PC-9 (cell line): ENCODE measurements at regions of chr5 and their contacts with region 1.

Region 1: GRCh38 chr5:145834917-145835847 is at the start of gene PRELID2:
- DNase-seq: peak; percentile 80 to 94
- H3K4me3 ChIP-seq: peak within 1 kb of the TSS; percentile 71
- H3K27ac ChIP-seq: peak within 1 kb of the TSS; percentile 35
- H3K4me1 ChIP-seq: peaks cover 25% of the 10 kb centered on the region
- H3K27me3 ChIP-seq: no peaks in the 10 kb centered on the region
- CTCF ChIP-seq: 0 out of 2 replicates have a peak, but pooled peaks have one; percentile 2
- total RNA-seq, gene PRELID2: 24.8 and 27.7 TPM in 2 replicates

Region 2: GRCh38 chr5:145887976-145888574 is 52.9 kb after region 1 on chr5:
- CTCF ChIA-PET with region 1: interaction called, 4 read pairs
- POLR2A ChIA-PET with region 1: no interaction called
- intact Hi-C with region 1: loop called (anchors 2 kb)
- DNase-seq: peak; percentile 49 to 55
- H3K4me3 ChIP-seq: no peak overlapping the region
- H3K27ac ChIP-seq: no peak overlapping the region
- H3K4me1 ChIP-seq: no peaks in the 10 kb centered on the region
- H3K27me3 ChIP-seq: no peaks in the 10 kb centered on the region
- CTCF ChIP-seq: peak; percentile 80

Region 3: DNA sequence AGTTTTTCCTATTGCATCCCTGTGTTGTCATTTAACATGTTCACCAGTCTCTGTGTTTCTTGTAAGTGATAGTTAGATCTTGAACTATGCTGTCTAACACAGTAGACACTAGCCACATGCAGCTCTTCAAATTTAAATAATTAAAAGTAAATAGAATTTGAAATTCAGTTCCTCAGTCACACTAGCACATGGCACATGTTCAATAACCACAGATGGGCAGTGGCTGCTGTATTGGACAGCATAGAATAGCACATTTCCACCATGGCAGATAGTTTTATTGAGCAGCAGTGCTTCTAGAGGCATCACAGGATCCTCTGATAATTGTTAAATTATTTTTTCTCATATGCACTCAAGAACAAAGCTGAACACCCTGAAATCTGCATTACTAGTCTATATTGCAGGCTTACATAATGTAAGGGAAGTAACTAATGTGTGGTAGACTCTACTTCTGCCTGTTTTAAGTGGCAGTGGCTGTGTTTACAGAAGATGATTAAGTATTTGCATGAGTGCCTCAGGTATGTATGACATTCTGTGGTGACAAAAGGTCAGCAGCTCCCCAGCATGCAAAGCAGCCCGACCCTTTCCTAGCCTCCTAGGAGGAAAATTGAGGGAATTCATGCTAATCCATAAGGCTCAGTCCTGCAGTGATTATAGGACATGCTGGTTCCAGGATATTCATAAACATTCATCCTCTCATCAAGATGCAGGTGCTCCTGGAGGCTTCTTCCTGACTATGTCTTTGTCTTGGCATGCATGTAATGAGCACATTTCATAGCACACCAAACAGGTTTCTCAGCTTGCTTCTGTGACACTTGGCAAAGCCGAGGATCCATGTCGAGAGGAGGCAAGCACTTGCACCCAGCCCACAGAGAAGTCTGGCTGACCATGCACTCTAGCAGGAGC is 146.7 kb after region 1 on chr5:
- CTCF ChIA-PET with region 1: no interaction called
- POLR2A ChIA-PET with region 1: no interaction called
- intact Hi-C with region 1: loop called (anchors 5 kb)
- DNase-seq: peak; percentile 70 to 89
- H3K4me3 ChIP-seq: no peak overlapping the region
- H3K27ac ChIP-seq: peak overlapping the region; percentile 57
- H3K4me1 ChIP-seq: peaks cover 48% of the 10 kb centered on the region
- H3K27me3 ChIP-seq: no peaks in the 10 kb centered on the region
- CTCF ChIP-seq: no peak

Region 4: DNA sequence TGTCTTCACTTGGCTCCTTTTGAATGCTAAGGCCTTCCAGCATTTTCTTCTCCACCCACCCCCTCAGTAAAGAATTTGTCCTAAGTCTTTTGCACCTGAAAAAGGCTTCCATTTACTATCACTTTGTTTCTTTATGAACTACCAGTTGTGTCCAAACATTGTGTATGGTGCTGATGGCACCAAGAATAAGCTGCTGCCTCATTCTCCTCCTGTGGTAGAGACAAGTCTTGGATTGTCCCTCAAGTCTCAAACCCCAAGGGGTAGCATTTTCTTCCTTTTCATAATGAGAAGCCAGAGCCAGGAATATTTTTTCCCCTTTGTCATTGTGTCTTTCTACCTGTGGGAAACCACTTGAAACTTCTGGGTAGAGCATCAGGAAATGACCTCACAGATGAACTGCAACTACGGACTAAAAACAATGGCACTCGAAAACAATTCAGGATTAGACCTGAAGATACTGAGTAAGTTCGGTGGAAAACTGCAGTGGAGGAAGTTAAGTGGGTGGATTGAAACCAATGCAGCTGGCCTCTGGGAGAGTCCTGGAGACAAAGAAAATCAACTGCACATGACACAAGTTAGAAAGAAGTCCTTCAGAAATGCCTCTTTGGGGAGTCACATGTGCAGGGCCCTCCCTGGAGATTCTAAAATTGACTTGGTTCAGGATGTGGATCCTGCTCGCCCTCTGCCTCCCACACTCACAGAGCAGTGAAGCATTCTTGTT is 181.7 kb after region 1 on chr5:
- CTCF ChIA-PET with region 1: no interaction called
- POLR2A ChIA-PET with region 1: no interaction called
- intact Hi-C with region 1: no loop called
- DNase-seq: no peak
- H3K4me3 ChIP-seq: no peak overlapping the region
- H3K27ac ChIP-seq: no peak overlapping the region
- H3K4me1 ChIP-seq: no peaks in the 10 kb centered on the region
- H3K27me3 ChIP-seq: no peaks in the 10 kb centered on the region
- CTCF ChIP-seq: no peak